ENCODE measurements at regions of chr13 and their contacts with region 1.

Region 1: DNA sequence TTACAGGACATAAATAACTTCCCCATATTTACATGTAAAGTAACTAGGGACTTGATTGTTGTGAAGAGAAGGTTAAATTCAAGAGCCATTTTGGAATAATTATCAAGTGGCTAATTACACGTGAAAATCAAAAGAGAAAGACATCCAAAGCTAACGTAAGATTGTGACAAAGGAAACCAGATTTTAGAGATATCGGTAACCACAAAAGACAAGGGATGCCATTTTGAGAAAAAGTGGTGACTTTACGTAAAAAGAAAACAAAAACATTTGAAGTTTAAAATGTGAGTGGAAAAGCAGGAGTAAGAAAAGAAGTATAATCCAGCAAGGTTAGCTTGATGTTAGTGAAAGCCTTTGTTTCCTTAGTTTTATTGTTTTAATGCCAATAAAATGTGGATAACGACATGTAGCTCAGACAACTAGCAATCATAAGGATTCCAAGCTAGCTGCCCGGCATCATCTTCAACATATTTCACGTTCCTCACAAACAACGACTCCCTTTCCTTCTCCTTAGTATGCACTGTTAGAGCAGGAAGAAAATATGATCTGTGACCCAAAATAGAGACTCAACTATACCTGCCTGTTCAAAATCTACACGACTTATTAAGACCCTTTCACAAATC is 11.0 kb upstream of the VWA8 start:
- DNase-seq: peak in 1 of 35 experiments; percentile 61
- ATAC-seq: peak in 2 of 4 experiments; percentile 35 to 77
- H3K4me3 ChIP-seq: no peak overlapping the region
- H3K4me3 Mint-ChIP-seq: peak overlapping the region in 2 of 3 donors; percentile 8 to 17
- H3K27ac ChIP-seq: peak overlapping the region; percentile 22
- H3K27ac Mint-ChIP-seq: peak overlapping the region; percentile 45 to 63
- H3K4me1 ChIP-seq: peaks cover 6 to 9% of the 10 kb centered on the region in 2 experiments
- H3K4me1 Mint-ChIP-seq: peaks cover 10 to 36% (median 22%) of the 10 kb centered on the region in 3 donors
- H3K27me3 ChIP-seq: peaks cover 0 to 4% of the 10 kb centered on the region in 2 experiments
- H3K27me3 Mint-ChIP-seq: peaks cover 0 to 2% of the 10 kb centered on the region in 2 donors

Region 2: GRCh38 chr13:42039946-42040729 is 68.2 kb after region 1 on chr13:
- CTCF ChIA-PET with region 1: no interaction called
- POLR2A ChIA-PET with region 1: interaction called in 1 of 2 experiments, 10 read pairs
- DNase-seq: peak; percentile 64 to 91 (median 77)
- ATAC-seq: peak; percentile 83 to 87 (median 85)
- H3K4me3 ChIP-seq: peak overlapping the region; percentile 85 to 89
- H3K4me3 Mint-ChIP-seq: peak overlapping the region; percentile 88 to 95 (median 88)
- H3K27ac ChIP-seq: peak overlapping the region; percentile 67
- H3K27ac Mint-ChIP-seq: peak overlapping the region; percentile 91 to 93
- H3K4me1 ChIP-seq: peaks cover 6 to 22% of the 10 kb centered on the region in 2 experiments
- H3K4me1 Mint-ChIP-seq: peaks cover 16 to 24% (median 19%) of the 10 kb centered on the region in 3 donors
- H3K27me3 ChIP-seq: no peaks in the 10 kb centered on the region
- H3K27me3 Mint-ChIP-seq: no peaks in the 10 kb centered on the region

Measured in T-cell (primary cell).